Aorta (tissue), 5 donors: ENCODE measurements at regions of chrX and their contacts with region 1.

Region 1: DNA sequence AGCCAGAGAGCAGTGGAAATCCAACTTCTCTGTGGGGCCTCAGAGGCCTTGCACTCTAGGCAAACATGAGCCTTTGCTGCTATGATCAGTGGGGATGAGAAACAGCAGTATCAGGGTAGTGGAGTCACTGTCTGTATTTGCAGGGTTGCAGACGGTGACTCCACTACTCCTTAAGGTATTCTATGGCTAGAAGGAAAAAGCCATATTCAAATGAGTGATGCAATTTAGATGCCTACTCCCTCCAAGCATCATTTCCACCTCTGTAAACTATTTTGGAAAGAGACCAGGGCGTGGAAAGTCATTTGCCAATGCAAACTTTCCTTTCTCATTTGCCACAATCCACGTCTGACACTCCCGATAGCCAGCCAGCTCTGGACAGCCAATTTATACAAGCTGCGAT is 35.6 kb upstream of the FAM9B start:
- DNase-seq: no peak
- ATAC-seq: no peak
- H3K4me3 ChIP-seq: no peak overlapping the region
- H3K27ac ChIP-seq: no peak overlapping the region
- H3K4me1 ChIP-seq: no peaks in the 10 kb centered on the region
- H3K27me3 ChIP-seq: no peaks in the 10 kb centered on the region

Region 2: GRCh38 chrX:9003041-9003440 is 66.5 kb before region 1 on chrX:
- intact Hi-C with region 1: loop called in 1 of 2 experiments (anchors 2 kb)
- DNase-seq: no peak
- ATAC-seq: no peak
- H3K4me3 ChIP-seq: no peak overlapping the region
- H3K27ac ChIP-seq: no peak overlapping the region
- H3K4me1 ChIP-seq: peaks cover 0 to 3% of the 10 kb centered on the region in 2 donors
- H3K27me3 ChIP-seq: no peaks in the 10 kb centered on the region

Region 3: DNA sequence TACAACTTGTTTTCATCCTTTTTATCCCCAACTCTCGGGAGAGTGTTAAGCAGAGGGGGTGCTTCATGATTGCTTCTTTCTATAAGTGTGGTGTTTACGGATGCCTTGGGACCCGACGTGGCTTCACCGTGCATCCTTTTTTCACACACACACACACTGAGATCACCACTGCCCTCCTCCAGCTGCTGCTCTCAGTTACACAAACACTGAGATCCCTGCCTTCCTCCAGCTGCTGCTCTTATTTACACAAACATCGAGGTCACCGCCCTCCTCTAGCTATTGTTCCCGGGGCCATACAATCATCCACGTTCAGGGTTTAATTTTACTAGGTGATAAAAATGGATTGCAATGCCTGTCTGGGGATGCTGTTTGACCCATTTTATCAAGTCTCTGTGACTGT is 119.7 kb after region 1 on chrX:
- intact Hi-C with region 1: no loop called
- DNase-seq: no peak
- ATAC-seq: no peak
- H3K4me3 ChIP-seq: no peak overlapping the region
- H3K27ac ChIP-seq: no peak overlapping the region
- H3K4me1 ChIP-seq: no peaks in the 10 kb centered on the region
- H3K27me3 ChIP-seq: no peaks in the 10 kb centered on the region